Breast epithelium (tissue), 4 donors: ENCODE measurements at regions of chr9 and their contacts with region 1.

Region 1: GRCh38 chr9:99192786-99193465 is 28.8 kb downstream of the ALG2 start:
- DNase-seq: no peak
- H3K4me3 ChIP-seq: no peak overlapping the region
- H3K27ac ChIP-seq: no peak overlapping the region
- H3K4me1 ChIP-seq: no peaks in the 10 kb centered on the region
- H3K27me3 ChIP-seq: no peaks in the 10 kb centered on the region
- CTCF ChIP-seq: no peak
- POLR2A ChIP-seq: no peak

Region 2: GRCh38 chr9:99221621-99222415 is 28.9 kb after region 1 on chr9 and contains the starts of genes ALG2 and SEC61B:
- intact Hi-C with region 1: loop called (anchors 1 kb)
- DNase-seq: peak; percentile 85 to 88
- H3K4me3 ChIP-seq: peak within 1 kb of the TSS; percentile 68 to 98 (median 89)
- H3K27ac ChIP-seq: peak within 1 kb of the TSS; percentile 94
- H3K4me1 ChIP-seq: peaks cover 0 to 18% of the 10 kb centered on the region in 2 donors
- H3K27me3 ChIP-seq: no peaks in the 10 kb centered on the region
- CTCF ChIP-seq: no peak
- POLR2A ChIP-seq: peak; percentile 30
- total RNA-seq, gene ALG2: 30.2 to 44.5 (median 40.3) TPM
- total RNA-seq, gene SEC61B: 86.3 to 121 (median 92.9) TPM